Common myeloid progenitor, CD34-positive (primary cell): ENCODE measurements at regions of chr3 and their contacts with region 1.

Region 1: GRCh38 chr3:172595641-172596393 is 72.6 kb upstream of the TNFSF10 start:
- DNase-seq: peak; percentile 69 to 82 (median 81)
- H3K4me3 ChIP-seq: peak overlapping the region in 6 of 7 experiments; percentile 38 to 72 (median 42)
- H3K27ac ChIP-seq: no peak overlapping the region
- H3K4me1 ChIP-seq: peaks cover 0 to 51% (median 37%) of the 10 kb centered on the region in 4 experiments
- H3K27me3 ChIP-seq: no peaks in the 10 kb centered on the region

Region 2: DNA sequence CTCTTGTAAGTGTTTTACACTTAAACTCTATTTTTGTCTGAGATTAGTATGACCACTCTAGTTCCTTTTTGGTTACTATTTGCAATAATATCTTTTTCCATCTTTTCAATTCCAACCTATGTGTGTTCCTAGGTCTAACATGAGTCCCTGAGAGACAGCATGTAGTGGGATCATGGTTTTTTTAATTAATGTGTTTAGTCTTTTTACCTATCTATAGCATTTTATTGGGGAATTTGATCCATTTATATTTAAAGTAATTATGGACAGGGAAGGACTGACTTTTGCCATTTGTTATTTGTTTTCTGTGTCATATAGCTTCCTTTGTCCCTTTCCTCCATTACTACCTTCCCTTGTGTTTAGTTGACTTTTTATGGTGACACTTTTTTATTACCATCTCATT is 94.3 kb before region 1 on chr3:
- CTCF ChIA-PET with region 1: interaction called, 10 read pairs
- POLR2A ChIA-PET with region 1: no interaction called
- DNase-seq: no peak
- H3K4me3 ChIP-seq: no peak overlapping the region
- H3K27ac ChIP-seq: no peak overlapping the region
- H3K4me1 ChIP-seq: no peaks in the 10 kb centered on the region
- H3K27me3 ChIP-seq: no peaks in the 10 kb centered on the region

Region 3: DNA sequence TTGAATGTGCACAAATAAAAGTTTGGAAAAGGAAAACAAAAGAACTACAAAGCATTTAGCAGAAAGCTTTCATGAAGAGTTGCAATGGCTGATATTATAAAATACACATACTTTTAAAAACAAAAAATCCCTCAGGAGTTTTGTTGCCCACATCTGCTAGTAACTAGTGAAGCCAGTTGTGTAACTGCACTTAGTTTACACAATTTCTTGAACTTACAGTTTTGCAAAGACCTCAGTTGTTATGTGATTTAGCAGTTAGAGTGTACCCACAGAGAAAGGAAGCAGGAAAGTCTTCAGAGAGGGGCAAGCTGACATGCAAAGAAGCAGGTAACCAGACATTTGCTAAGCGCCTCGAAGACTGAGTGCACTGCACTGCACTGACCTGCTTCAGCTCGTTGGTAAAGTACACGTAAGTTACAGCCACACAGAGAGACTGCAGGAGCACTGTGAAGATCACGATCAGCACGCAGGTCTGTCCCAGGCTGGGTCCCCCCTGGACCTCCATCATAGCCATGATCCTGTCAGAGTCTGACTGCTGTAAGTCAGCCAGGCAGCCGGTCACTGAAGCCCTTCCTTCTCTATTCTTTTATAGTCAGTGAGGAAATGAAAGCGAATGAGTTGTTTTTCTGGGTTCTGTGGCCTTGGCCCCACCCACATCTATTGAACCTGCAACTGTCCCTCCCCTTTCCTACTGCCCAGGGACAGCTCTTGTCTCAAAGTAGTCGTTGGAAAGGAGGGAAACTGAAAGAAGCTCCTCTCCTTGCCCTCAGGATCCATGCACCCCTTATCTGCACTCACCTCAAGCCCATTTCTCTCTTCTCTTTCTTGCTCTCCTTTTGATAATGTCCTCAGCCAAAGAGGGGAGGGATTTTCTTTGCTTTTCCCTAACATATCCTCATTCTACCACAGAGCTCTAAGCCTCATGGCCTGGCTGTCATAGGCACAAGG is 72.7 kb before region 1 on chr3 and contains the start of gene TNFSF10:
- CTCF ChIA-PET with region 1: interaction called, 38 read pairs
- POLR2A ChIA-PET with region 1: no interaction called
- DNase-seq: peak; percentile 66 to 87 (median 86)
- H3K4me3 ChIP-seq: peak within 1 kb of the TSS; percentile 74 to 97 (median 79)
- H3K27ac ChIP-seq: peak within 1 kb of the TSS; percentile 53 to 81
- H3K4me1 ChIP-seq: peaks cover 9 to 54% (median 25%) of the 10 kb centered on the region in 4 experiments
- H3K27me3 ChIP-seq: no peaks in the 10 kb centered on the region

Region 4: DNA sequence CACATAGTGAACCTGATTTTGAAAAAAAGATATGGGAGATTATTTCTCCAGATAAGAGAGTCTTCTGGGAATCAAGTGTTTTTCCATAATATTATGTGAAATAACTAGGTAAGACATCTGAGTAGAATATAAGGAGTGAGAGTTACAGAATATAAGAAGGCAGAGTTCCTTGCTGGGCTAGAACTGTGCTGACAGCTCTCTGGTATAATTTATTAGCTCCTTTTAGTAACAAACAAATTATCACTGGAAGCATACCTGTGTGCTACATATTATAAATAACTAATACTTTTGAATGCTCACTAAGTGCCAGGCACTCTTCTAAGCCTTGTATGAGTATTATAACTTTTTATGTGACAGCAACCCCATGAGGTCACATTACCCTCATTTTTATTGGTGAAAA is 53.7 kb before region 1 on chr3:
- CTCF ChIA-PET with region 1: interaction called, 10 read pairs
- POLR2A ChIA-PET with region 1: no interaction called
- DNase-seq: no peak
- H3K4me3 ChIP-seq: no peak overlapping the region
- H3K27ac ChIP-seq: no peak overlapping the region
- H3K4me1 ChIP-seq: peaks cover 13 to 40% (median 28%) of the 10 kb centered on the region in 4 experiments
- H3K27me3 ChIP-seq: no peaks in the 10 kb centered on the region

Region 5: DNA sequence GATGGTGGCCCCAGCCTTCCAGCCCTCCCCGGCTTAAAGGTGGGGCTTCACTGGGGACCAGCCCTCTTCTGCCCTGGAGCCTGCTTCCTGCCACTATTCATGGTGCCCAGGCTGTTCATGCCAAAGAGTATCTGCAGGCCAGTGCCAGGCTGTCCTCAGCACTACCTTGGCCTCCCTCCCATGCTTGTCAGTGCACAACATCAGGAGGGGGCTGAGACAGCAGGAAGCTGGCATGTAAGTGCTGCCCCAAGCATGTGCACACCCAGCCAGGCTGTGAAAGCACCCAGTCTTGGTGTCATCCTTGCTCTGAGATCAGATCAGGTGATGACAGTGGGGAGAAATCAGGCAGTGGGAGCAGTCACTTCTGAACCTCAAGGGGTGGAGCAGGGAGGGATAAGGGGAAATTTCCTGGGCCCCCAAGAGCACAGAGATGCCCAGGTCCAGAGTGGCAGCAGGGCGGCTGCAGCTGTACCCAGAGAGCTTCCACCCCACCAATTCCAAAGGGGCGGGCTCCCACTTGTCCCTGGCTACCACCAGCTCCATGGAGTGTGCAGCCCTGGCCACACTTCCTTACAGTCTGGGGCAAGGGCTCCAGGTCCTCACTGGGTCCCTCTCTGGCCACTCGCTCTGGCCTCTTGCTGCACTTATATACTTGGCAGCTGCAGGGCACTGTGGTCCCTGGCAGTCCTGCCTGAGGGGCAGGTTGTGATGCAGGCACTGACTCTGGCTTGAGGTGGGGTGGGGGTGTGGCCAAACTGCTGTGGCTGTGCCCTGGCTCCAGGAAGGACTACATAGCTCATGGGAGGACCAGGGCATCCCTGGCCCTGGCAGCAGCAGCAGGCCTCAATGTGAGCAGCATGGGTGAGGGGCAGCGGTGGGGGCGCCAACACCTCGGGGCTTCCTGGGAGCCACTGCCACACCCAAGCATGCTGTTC is 18.8 kb after region 1 on chr3:
- CTCF ChIA-PET with region 1: interaction called, 23 read pairs
- POLR2A ChIA-PET with region 1: no interaction called
- DNase-seq: no peak
- H3K4me3 ChIP-seq: no peak overlapping the region
- H3K27ac ChIP-seq: no peak overlapping the region
- H3K4me1 ChIP-seq: peaks cover 0 to 7% (median 4%) of the 10 kb centered on the region in 4 experiments
- H3K27me3 ChIP-seq: no peaks in the 10 kb centered on the region